Activated CD4-positive, alpha-beta T cell treated with anti-CD3 and anti-CD28 coated beads, Interleukin-2, amount 10 ng/mL, durations not matched to agents 7 days and 5 days (primary cell): ENCODE measurements at regions of chr1 and their contacts with region 1.

Region 1: DNA sequence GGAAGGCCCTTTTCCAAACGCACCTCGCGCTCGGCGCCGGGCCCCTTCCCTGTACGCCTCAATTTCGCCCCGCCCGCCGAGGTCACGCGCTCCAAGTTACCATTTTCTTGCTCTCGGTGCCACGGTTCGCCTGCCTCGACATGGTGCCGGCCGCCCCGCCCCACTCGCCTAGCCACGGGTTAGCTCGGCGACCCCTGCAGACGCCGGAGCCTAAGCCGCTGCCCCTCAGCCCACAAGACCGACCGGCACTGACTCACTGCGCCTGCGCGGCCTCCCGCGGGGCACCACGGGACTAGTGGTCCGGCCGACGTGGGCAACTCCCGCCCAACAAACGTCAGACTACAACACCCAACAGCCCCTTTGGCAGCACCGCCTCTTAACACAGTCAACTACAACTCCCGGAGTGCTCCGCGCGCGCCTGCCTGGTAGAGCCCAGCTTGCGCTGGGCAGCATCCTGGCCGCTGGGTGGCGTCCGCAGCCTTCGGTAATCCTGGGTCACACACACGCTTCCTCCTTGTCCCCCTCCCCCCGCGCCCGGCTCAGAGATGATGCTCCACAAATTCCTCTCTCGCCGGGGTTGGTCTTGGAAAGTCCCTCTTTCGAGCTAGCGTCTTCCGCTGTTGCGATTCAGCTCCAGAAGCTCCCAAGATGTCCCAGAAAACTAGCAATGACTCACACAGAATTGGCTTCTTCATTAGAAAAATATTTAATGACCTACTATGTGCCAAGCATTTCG is at the start of gene TRAPPC3:
- DNase-seq: peak; percentile 99
- H3K4me3 Mint-ChIP-seq: peak within 1 kb of the TSS; percentile 97
- H3K27ac Mint-ChIP-seq: peak within 1 kb of the TSS; percentile 98
- H3K4me1 Mint-ChIP-seq: peaks cover 67% of the 10 kb centered on the region
- H3K27me3 Mint-ChIP-seq: no peaks in the 10 kb centered on the region
- total RNA-seq, gene TRAPPC3: 57.5 to 59.3 TPM

Region 2: DNA sequence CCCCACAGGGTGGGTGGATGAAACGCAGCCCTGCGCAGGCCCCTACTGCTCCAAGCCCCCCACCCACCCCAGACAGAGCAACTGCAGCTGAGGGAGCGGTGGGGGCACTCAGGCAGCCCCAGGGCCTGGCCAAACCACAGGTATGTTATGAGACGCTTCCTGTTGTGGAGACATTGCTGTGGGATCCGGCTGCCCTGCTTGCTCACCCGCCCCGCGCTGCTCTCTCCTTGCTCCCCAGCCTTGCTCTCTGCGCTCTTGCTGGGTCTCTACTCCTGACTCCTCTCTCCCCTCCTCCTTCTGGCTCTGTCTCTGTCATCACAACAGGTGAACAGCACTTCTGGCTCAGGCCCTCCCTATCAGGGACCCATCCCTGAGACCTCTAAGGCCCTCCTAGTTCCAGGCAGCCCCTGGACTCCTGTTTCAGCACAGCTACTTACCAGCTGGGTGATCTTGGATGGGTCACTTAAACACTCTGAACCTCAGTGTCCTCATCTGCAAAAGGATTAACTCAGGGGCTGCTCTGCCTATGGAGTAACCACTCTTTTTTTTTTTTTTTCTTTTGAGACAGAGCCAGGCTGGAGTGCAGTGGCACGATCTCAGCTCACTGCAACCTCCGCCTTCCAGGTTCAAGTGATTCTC is 40.2 kb before region 1 on chr1:
- CTCF ChIA-PET with region 1: interaction called, 12 read pairs
- POLR2A ChIA-PET with region 1: no interaction called
- DNase-seq: peak; percentile 67
- H3K4me3 Mint-ChIP-seq: no peak overlapping the region
- H3K27ac Mint-ChIP-seq: peak overlapping the region; percentile 91
- H3K4me1 Mint-ChIP-seq: peaks cover 31% of the 10 kb centered on the region
- H3K27me3 Mint-ChIP-seq: no peaks in the 10 kb centered on the region

Region 3: GRCh38 chr1:36160949-36161485 is 11.6 kb after region 1 on chr1:
- CTCF ChIA-PET with region 1: interaction called, 85 read pairs
- POLR2A ChIA-PET with region 1: interaction called, 5 read pairs
- DNase-seq: peak; percentile 79
- H3K4me3 Mint-ChIP-seq: peak overlapping the region; percentile 79
- H3K27ac Mint-ChIP-seq: peak overlapping the region; percentile 96
- H3K4me1 Mint-ChIP-seq: peaks cover 70% of the 10 kb centered on the region
- H3K27me3 Mint-ChIP-seq: no peaks in the 10 kb centered on the region

Region 4: GRCh38 chr1:36187800-36188593 is 38.6 kb after region 1 on chr1:
- CTCF ChIA-PET with region 1: interaction called, 58 read pairs
- POLR2A ChIA-PET with region 1: no interaction called
- DNase-seq: peak; percentile 88
- H3K4me3 Mint-ChIP-seq: no peak overlapping the region
- H3K27ac Mint-ChIP-seq: peak overlapping the region; percentile 84
- H3K4me1 Mint-ChIP-seq: peaks cover 8% of the 10 kb centered on the region
- H3K27me3 Mint-ChIP-seq: no peaks in the 10 kb centered on the region

Region 5: DNA sequence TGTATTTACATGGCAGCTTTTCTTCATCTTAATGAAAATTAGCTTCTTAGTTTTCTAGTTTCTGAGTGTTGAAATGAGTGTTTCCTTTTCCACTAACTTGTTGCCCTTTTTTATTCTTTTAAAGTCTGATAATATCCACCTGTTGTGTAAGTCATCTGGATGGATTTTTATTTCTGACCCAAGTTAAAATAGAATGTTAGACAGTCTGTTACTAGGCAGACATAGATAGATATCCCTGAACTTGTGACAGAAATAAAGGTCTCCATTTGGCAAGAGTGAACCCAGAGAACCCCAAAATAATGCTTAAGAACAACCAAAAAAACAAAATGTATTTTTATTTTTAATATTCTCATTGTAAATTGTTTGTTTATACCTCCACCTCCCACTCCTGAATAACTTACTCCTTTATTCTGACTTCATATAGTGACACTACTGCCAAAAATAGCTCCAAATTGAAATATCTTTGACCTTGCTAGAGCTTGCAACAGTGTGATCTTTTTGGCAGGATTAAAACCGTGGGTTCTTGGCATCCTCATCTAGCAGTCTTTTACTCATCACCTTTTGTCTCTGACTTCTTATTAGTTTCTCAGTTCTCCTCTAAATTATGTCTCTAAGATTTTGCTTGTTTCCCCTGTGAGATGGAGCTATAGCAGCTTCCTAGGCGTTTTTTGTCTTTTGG is 129.8 kb after region 1 on chr1:
- CTCF ChIA-PET with region 1: interaction called, 20 read pairs
- POLR2A ChIA-PET with region 1: no interaction called
- DNase-seq: no peak
- H3K4me3 Mint-ChIP-seq: no peak overlapping the region
- H3K27ac Mint-ChIP-seq: no peak overlapping the region
- H3K4me1 Mint-ChIP-seq: peaks cover 18% of the 10 kb centered on the region
- H3K27me3 Mint-ChIP-seq: no peaks in the 10 kb centered on the region